ENCODE measurements at regions of chr18 and their contacts with region 1.

Region 1: GRCh38 chr18:2223849-2224248 is 347.5 kb downstream of the METTL4 start:
- DNase-seq: peak; percentile 33
- ATAC-seq: peak; percentile 71 to 87

Region 2: GRCh38 chr18:1585879-1586488 is 637.9 kb before region 1 on chr18:
- intact Hi-C with region 1: loop called in 1 of 2 experiments (anchors 10 kb)
- DNase-seq: no peak
- ATAC-seq: peak in 1 of 2 donors; percentile 38

Region 3: DNA sequence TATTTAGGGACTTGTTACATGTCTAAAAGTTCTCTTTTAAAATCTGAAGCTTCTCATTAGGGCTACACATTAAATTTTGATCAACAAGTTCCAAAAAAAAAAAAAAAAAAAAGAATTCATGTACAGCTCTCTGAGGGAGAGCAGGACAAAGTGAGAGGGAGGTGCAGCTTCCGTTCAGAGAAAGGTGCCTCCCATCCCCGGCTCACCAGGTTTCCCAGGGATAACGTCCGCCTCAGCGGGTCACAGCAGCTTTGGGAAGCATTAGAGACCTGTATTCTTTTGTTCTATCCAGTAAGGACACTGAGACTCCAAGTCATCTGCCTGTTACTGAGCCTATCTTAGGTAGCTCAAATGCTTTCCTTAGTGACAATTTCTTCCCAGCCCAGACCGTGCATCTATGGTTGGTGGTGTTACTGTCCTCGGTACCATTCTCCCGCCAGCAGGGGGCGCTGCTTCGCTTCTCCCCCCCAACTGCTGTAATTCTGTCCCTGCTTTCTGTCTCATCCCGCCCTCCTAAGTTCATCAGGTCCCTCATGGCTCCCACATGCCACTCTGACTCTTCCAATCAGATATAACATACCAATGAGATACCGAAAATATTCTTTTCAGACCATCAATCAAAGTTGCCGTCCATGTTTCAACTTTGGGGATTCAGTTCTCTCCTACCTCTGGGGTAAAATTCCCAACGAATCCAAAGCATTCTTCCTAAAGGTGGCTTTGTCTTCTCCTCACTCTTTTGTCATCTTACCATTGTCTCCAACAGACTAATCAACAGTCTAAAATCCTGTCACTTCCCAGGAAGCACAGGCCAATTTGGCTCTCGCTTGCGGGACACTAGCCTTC is 119.0 kb before region 1 on chr18:
- intact Hi-C with region 1: loop called in 1 of 2 experiments (anchors 5 kb)
- DNase-seq: peak; percentile 47
- ATAC-seq: peak; percentile 77 to 79

Measured in left cardiac atrium (tissue), 4 donors.